ENCODE measurements at regions of chr11 and their contacts with region 1.

Region 1: DNA sequence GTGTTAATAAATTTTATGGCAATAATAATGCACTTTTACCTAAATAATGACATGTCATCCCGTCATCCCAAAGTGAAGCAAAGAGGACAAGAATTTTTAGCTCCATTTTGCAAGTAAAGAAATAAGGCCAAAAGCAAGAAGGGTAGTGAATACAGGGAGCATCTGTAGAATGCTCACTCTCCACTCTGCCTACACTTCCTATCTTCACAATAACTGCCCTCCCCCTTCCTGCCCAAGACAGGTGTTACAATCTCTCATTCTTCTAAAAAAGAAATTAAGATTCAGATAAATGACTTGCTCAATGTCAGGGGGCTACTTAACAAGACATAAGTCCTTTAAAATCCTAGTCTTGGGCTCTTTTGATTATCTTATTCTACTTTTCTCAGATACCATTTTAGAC is 8.9 kb downstream of the RDX start:
- DNase-seq: no peak
- ATAC-seq: no peak
- H3K4me3 ChIP-seq: no peak overlapping the region
- H3K27ac ChIP-seq: no peak overlapping the region
- H3K4me1 ChIP-seq: peaks cover 0 to 75% (median 33%) of the 10 kb centered on the region in 9 donors
- H3K27me3 ChIP-seq: no peaks in the 10 kb centered on the region
- CTCF ChIP-seq: no peak

Region 2: DNA sequence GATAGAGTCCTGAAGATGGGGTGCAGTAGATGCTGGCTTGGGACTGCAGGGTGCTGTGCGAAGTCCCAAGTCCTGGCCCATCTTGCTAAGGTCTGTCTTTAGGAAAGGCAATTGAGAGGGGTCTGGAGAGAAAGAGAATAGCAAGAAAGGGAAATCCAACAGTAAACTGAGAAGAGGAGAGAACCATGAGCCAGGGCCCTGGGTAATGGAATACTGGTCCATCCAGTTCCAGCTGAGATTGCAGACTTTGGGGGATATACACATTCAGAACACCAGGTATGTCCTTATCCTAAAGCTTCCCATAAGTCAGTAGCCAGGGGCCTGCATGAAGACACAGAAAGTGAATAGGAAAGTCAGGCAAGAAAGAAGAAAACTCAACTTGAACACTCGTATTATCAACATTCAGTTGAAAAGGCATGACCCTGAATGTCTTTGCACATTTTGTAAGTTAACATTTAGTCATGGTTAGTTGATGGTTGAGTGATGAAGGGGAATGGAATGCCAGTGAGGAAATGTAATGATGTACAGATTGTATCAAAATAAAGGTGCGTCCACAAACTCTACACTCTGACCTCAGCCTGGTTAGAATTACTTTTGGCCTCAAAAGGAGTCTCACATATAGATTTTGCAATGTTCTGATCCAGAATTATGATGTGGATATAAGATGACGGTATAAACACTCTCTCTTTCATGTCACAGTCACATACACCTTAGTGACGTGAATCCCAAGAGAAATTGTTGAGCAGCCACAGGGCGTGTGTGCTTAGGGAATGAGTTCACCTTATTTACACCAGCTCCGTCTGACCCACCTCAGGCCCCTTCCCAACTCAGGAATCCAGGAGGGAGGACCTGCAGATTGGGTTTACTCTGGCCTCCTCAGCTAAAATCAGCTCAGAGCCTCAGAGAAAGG is 91.4 kb before region 1 on chr11:
- intact Hi-C with region 1: no loop called
- DNase-seq: no peak
- ATAC-seq: no peak
- H3K4me3 ChIP-seq: no peak overlapping the region
- H3K27ac ChIP-seq: no peak overlapping the region
- H3K4me1 ChIP-seq: no peaks in the 10 kb centered on the region
- H3K27me3 ChIP-seq: no peaks in the 10 kb centered on the region
- CTCF ChIP-seq: no peak

Region 3: GRCh38 chr11:110219011-110219785 is 68.3 kb before region 1 on chr11:
- intact Hi-C with region 1: no loop called
- DNase-seq: no peak
- ATAC-seq: no peak
- H3K4me3 ChIP-seq: no peak overlapping the region
- H3K27ac ChIP-seq: no peak overlapping the region
- H3K4me1 ChIP-seq: no peaks in the 10 kb centered on the region
- H3K27me3 ChIP-seq: no peaks in the 10 kb centered on the region
- CTCF ChIP-seq: no peak

Region 4: GRCh38 chr11:110230377-110230776 is 57.2 kb before region 1 on chr11:
- intact Hi-C with region 1: loop called in 1 of 10 experiments (anchors 10 kb)
- DNase-seq: no peak
- ATAC-seq: no peak
- H3K4me3 ChIP-seq: no peak overlapping the region
- H3K27ac ChIP-seq: no peak overlapping the region
- H3K4me1 ChIP-seq: no peaks in the 10 kb centered on the region
- H3K27me3 ChIP-seq: no peaks in the 10 kb centered on the region
- CTCF ChIP-seq: no peak